Prostate gland (tissue), 2 donors: ENCODE measurements at regions of chr7 and their contacts with region 1.

Region 1: DNA sequence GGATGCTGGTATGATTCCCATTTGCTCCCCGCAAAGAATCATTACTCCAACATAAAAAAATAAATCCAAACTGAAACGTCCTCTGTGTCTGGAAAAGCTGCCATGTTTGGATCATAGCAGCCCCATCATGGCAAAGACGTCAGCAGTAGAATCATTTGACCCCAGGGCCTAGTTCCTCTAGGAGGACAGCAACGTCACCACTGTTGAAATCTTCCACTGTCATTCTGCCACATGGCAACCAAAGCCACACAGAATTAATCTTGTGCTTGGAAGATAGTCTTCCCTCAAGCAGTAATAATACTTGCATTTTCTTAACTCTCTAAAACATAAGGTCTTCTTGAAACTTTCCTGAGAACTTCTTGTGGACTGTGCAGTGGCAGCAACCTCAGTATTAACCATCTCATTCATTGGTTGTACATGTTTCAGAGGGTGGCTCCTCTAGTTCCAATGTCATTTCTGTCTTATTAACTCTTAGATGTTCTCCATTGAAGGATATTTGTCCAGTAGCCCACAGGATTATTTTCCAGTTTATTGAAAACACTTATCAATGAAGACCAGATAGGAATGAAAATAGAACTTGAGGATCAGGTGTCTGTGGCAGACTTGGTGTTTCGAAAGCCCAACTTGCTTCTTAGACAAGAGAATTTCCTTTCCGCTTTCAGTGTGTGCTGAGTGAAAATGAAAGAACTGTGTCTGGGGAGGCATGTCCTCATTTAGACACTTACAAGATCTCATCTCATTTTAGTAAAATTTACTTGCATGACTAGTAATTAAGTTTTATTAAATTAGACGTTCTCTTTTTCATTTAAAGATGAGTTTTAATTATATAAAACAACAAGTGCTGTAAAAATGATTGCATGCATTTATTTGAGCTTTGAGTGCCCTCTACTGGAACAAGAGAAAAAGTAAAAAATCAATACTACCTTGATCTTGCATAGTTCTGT is 28.9 kb upstream of the INHBA start:
- DNase-seq: no peak
- H3K4me3 ChIP-seq: no peak overlapping the region
- H3K27ac ChIP-seq: no peak overlapping the region
- H3K4me1 ChIP-seq: no peaks in the 10 kb centered on the region
- H3K27me3 ChIP-seq: no peaks in the 10 kb centered on the region
- CTCF ChIP-seq: peak in 2 of 4 experiments; percentile 49
- POLR2A ChIP-seq: no peak

Region 2: GRCh38 chr7:40221836-40222235 is 1509.9 kb before region 1 on chr7:
- intact Hi-C with region 1: loop called (anchors 10 kb)
- DNase-seq: no peak
- H3K4me3 ChIP-seq: no peak overlapping the region
- H3K27ac ChIP-seq: no peak overlapping the region
- H3K4me1 ChIP-seq: no peaks in the 10 kb centered on the region
- H3K27me3 ChIP-seq: no peaks in the 10 kb centered on the region
- CTCF ChIP-seq: no peak
- POLR2A ChIP-seq: no peak

Region 3: GRCh38 chr7:41416208-41416595 is 315.6 kb before region 1 on chr7:
- intact Hi-C with region 1: no loop called
- DNase-seq: no peak
- H3K4me3 ChIP-seq: no peak overlapping the region
- H3K27ac ChIP-seq: no peak overlapping the region
- H3K4me1 ChIP-seq: no peaks in the 10 kb centered on the region
- H3K27me3 ChIP-seq: no peaks in the 10 kb centered on the region
- CTCF ChIP-seq: no peak
- POLR2A ChIP-seq: no peak

Region 4: DNA sequence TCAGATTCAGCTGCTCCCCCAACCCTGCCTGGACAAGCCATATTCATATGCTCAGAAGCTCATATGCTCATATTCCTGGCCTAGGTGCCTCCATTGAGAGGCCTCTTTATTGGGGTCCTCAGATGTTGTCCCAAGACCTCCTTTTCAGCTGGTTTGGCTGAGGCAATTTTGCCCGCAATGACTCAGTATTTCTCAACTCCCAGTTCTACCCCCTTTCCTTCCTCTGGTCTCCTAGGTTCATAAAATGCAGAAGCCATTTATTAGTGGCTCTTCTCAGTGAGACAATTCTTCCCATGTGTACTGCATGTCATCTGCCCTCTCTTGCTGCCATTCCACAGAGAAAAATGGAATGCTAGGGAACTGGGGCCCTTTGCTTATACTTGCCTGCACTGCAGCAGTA is 139.5 kb before region 1 on chr7:
- intact Hi-C with region 1: no loop called
- DNase-seq: no peak
- H3K4me3 ChIP-seq: no peak overlapping the region
- H3K27ac ChIP-seq: no peak overlapping the region
- H3K4me1 ChIP-seq: no peaks in the 10 kb centered on the region
- H3K27me3 ChIP-seq: no peaks in the 10 kb centered on the region
- CTCF ChIP-seq: no peak
- POLR2A ChIP-seq: no peak

Region 5: DNA sequence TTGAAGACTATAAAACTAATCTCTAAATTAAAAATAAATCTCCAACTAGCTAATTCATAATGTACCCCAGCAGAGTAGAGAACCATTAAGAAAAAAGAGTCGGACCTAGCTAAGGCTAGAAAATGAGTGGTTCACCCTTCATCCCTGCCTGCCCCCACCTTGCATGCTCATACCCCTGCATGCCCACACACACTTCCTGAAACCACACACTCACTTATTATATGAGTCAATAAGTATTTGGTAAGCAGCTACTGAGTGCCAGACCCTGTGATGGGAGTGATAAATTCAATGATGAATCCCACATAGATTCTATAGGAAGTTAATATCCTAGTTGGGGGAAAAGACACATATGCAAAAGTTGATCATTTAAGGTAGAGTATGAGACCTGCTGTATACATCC is 124.0 kb after region 1 on chr7:
- intact Hi-C with region 1: no loop called
- DNase-seq: no peak
- H3K4me3 ChIP-seq: no peak overlapping the region
- H3K27ac ChIP-seq: no peak overlapping the region
- H3K4me1 ChIP-seq: no peaks in the 10 kb centered on the region
- H3K27me3 ChIP-seq: no peaks in the 10 kb centered on the region
- CTCF ChIP-seq: no peak
- POLR2A ChIP-seq: no peak